ENCODE measurements at regions of chr9 and their contacts with region 1.

Region 1: DNA sequence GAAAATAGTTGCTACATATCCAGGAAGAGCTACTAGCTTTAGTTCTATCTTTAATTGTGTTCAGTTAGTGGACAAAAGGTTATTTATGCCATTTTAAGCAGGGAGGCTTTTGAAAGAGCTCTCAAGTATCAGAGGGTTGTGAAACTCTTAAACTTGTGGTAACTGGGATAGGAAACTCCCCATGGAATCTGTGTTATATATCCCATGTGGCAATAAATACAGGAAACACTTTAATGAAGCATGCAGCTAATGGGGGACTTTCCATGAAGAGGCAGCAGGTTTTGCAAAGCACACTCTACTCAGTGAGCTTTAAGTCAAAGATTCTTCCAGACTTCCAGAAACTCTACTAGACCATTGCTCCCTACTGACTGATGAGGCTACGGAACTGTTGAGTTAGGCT is 805.0 kb upstream of the C9orf72 start:
- DNase-seq: no peak
- H3K4me3 ChIP-seq: no peak overlapping the region
- H3K27ac ChIP-seq: no peak overlapping the region
- H3K4me1 ChIP-seq: no peaks in the 10 kb centered on the region
- H3K27me3 ChIP-seq: no peaks in the 10 kb centered on the region
- CTCF ChIP-seq: no peak
- POLR2A ChIP-seq: no peak

Region 2: DNA sequence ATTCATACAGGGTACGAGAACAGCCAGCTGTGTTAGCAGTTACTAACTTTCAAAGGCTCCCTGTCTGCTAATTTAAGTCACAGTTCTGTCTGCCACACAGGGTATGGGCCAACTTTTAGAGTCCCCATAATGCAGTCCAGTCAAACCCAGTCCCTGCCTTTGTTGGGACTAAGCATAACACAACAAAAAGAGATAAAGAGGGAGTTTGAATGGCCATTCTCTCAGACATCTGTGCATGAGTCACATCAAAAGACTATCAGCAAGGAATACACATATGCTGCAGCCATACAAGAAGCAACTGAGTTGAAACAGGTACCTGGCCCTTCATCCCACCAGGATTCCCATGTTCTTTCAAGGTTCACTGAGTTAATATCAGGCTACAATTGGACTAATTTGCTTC is 60.5 kb before region 1 on chr9:
- CTCF ChIA-PET with region 1: no interaction called
- POLR2A ChIA-PET with region 1: no interaction called
- dilution Hi-C with region 1: no loop called
- intact Hi-C with region 1: loop called (anchors 10 kb)
- DNase-seq: no peak
- H3K4me3 ChIP-seq: no peak overlapping the region
- H3K27ac ChIP-seq: no peak overlapping the region
- H3K4me1 ChIP-seq: no peaks in the 10 kb centered on the region
- H3K27me3 ChIP-seq: no peaks in the 10 kb centered on the region
- CTCF ChIP-seq: no peak
- POLR2A ChIP-seq: no peak

Region 3: GRCh38 chr9:28365020-28365640 is 13.1 kb before region 1 on chr9:
- CTCF ChIA-PET with region 1: no interaction called
- POLR2A ChIA-PET with region 1: no interaction called
- dilution Hi-C with region 1: no loop called
- intact Hi-C with region 1: no loop called
- DNase-seq: no peak
- H3K4me3 ChIP-seq: no peak overlapping the region
- H3K27ac ChIP-seq: no peak overlapping the region
- H3K4me1 ChIP-seq: no peaks in the 10 kb centered on the region
- H3K27me3 ChIP-seq: no peaks in the 10 kb centered on the region
- CTCF ChIP-seq: no peak
- POLR2A ChIP-seq: no peak

Measured in endothelial cell of umbilical vein (primary cell).